ENCODE measurements at regions of chr6 and their contacts with region 1.

Region 1: DNA sequence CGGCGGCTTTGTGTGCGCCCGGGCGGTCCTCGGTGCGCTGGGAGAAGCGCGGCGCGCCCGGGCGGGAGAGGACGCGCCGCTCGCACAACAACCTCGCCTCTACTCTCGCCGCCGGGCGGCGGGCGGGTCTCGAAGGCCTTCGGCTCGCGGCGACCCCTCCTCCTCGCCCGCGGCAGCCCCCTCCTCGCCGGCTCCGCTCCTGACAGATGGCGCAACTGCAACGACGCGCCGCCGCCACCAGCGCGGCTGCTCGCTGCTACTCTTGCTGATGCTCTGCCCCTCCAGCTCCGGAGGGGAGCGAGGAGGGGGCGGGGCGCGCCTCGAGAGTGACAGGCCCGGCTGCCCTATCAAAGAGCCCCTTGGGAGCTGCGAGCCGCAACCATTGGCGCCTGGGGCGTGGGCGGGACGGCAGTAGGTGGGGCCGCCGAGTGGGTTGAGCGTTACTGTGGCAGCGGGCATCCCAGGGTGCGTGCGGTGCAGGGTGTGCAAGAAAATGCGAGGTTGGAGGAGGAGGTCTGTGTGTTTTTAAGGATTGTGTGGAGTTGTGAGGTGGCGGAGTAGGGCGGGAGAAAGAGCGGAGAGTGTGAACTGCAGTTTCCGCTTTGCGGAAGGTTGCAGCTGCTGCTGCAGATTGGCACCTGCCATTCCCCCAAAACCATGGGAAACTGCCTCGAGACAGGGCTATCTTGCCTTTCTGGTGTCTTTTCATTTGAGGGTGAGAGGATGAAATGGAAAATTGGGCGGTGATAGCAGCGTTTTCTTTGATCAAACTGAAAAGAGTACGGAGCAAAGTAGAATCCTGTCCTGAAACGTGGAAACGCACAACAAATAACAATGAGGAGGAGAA is at the start of gene FYN:
- DNase-seq: peak; percentile 99
- ATAC-seq: peak; percentile 99
- total RNA-seq, gene FYN: 60.4 to 75.8 TPM

Region 2: GRCh38 chr6:111804627-111805235 is 68.7 kb before region 1 on chr6:
- intact Hi-C with region 1: loop called in 1 of 2 experiments (anchors 5 kb)
- DNase-seq: peak; percentile 47
- ATAC-seq: peak; percentile 80

Measured in left cardiac atrium (tissue), 4 donors.